CD4-positive, alpha-beta T cell (primary cell): ENCODE measurements at regions of chr10 and their contacts with region 1.

Region 1: GRCh38 chr10:114821293-114821914 is at the start of gene FHIP2A:
- DNase-seq: peak; percentile 61 to 93 (median 82)
- ATAC-seq: peak; percentile 92
- H3K4me3 ChIP-seq: peak within 1 kb of the TSS; percentile 66
- H3K4me3 Mint-ChIP-seq: peak within 1 kb of the TSS; percentile 94
- H3K27ac ChIP-seq: peak within 1 kb of the TSS; percentile 49 to 57
- H3K27ac Mint-ChIP-seq: peak within 1 kb of the TSS; percentile 92
- H3K4me1 ChIP-seq: peaks cover 15% of the 10 kb centered on the region
- H3K4me1 Mint-ChIP-seq: peaks cover 41% of the 10 kb centered on the region
- H3K27me3 ChIP-seq: no peaks in the 10 kb centered on the region
- H3K27me3 Mint-ChIP-seq: no peaks in the 10 kb centered on the region
- CTCF ChIP-seq: peak; percentile 25
- total RNA-seq, gene FHIP2A: 52.8 to 53.7 TPM

Region 2: GRCh38 chr10:113678690-113679462 is 1142.5 kb before region 1 on chr10:
- CTCF ChIA-PET with region 1: no interaction called
- POLR2A ChIA-PET with region 1: no interaction called
- intact Hi-C with region 1: no loop called
- DNase-seq: peak; percentile 36 to 79 (median 60)
- ATAC-seq: peak; percentile 30
- H3K4me3 ChIP-seq: peak overlapping the region; percentile 77
- H3K4me3 Mint-ChIP-seq: peak overlapping the region; percentile 98
- H3K27ac ChIP-seq: peak overlapping the region in 1 of 2 donors; percentile 75
- H3K27ac Mint-ChIP-seq: peak overlapping the region; percentile 88
- H3K4me1 ChIP-seq: peaks cover 25% of the 10 kb centered on the region
- H3K4me1 Mint-ChIP-seq: peaks cover 27% of the 10 kb centered on the region
- H3K27me3 ChIP-seq: no peaks in the 10 kb centered on the region
- H3K27me3 Mint-ChIP-seq: peaks cover 3% of the 10 kb centered on the region
- CTCF ChIP-seq: peak; percentile 64

Region 3: DNA sequence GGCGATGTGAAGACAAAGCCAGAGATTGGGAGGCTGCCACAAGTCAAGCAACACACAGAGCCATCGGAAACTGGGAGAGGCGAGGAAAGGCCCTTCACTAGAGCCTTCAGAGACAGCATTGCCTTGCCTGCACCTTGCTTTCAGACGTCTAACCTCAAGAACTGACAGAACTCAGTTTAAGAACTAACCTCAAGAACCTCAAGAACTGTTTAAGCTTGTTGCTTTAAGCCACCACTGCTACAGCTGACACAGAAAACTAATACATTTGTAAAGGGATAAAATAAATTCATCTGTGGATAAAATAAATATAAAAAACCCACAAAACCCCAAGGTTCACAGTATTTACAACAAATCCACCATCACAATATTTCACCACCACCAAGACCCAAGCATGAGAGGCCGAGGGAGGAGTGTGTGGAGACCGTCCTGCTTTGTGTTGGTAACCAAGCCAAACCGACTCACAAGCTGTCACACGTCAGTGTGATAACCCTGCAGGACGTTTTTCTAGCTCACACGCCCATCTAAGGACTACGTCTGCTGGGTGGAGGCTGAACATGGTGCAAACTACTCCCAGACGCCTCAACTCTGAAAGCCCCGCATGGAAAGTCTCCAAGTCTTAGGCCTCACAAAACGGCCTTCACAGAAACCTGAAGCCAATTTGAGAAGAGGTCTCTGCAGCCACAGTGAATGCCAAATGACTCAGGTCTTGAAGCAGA is 280.2 kb before region 1 on chr10:
- CTCF ChIA-PET with region 1: interaction called, 7 read pairs
- POLR2A ChIA-PET with region 1: interaction called, 10 read pairs
- intact Hi-C with region 1: loop called in 1 of 2 experiments (anchors 10 kb)
- DNase-seq: peak; percentile 58 to 93 (median 68)
- ATAC-seq: peak; percentile 76
- H3K4me3 ChIP-seq: peak overlapping the region; percentile 8
- H3K4me3 Mint-ChIP-seq: peak overlapping the region; percentile 50
- H3K27ac ChIP-seq: peak overlapping the region; percentile 86 to 92
- H3K27ac Mint-ChIP-seq: peak overlapping the region; percentile 96
- H3K4me1 ChIP-seq: peaks cover 92% of the 10 kb centered on the region
- H3K4me1 Mint-ChIP-seq: peaks cover 96% of the 10 kb centered on the region
- H3K27me3 ChIP-seq: no peaks in the 10 kb centered on the region
- H3K27me3 Mint-ChIP-seq: no peaks in the 10 kb centered on the region
- CTCF ChIP-seq: no peak

Region 4: GRCh38 chr10:114801411-114801813 is 20.0 kb before region 1 on chr10:
- CTCF ChIA-PET with region 1: interaction called, 5 read pairs
- POLR2A ChIA-PET with region 1: interaction called, 14 read pairs
- intact Hi-C with region 1: no loop called
- DNase-seq: peak in 7 of 14 experiments; percentile 1 to 76 (median 18)
- ATAC-seq: peak; percentile 85
- H3K4me3 ChIP-seq: peak overlapping the region; percentile 21
- H3K4me3 Mint-ChIP-seq: peak overlapping the region; percentile 66
- H3K27ac ChIP-seq: peak overlapping the region in 1 of 2 donors; percentile 3
- H3K27ac Mint-ChIP-seq: peak overlapping the region; percentile 70
- H3K4me1 ChIP-seq: peaks cover 22% of the 10 kb centered on the region
- H3K4me1 Mint-ChIP-seq: peaks cover 18% of the 10 kb centered on the region
- H3K27me3 ChIP-seq: no peaks in the 10 kb centered on the region
- H3K27me3 Mint-ChIP-seq: no peaks in the 10 kb centered on the region
- CTCF ChIP-seq: no peak

Region 5: DNA sequence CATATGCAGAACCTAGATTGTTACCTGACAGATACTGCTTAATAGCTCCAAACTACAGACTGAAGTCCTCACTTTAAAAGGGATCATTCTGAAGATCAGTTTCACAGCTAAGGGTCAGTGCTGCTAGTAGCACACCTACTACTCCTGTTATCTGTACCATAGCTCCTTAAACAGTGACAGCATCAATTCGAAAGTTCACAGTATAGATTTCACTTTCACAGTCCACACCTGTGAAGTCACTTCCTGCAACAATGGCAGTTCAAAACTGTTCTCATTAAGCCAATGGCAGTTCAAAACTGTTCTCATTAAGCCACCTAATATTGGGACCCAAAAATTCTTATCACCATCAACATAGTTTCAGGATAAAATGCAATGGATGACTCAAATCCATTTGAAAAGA is 10.5 kb before region 1 on chr10:
- CTCF ChIA-PET with region 1: interaction called, 19 read pairs
- POLR2A ChIA-PET with region 1: interaction called, 7 read pairs
- intact Hi-C with region 1: no loop called
- DNase-seq: peak in 1 of 14 experiments; percentile 51
- ATAC-seq: no peak
- H3K4me3 ChIP-seq: no peak overlapping the region
- H3K4me3 Mint-ChIP-seq: no peak overlapping the region
- H3K27ac ChIP-seq: no peak overlapping the region
- H3K27ac Mint-ChIP-seq: peak overlapping the region; percentile 53
- H3K4me1 ChIP-seq: peaks cover 15% of the 10 kb centered on the region
- H3K4me1 Mint-ChIP-seq: peaks cover 32% of the 10 kb centered on the region
- H3K27me3 ChIP-seq: no peaks in the 10 kb centered on the region
- H3K27me3 Mint-ChIP-seq: no peaks in the 10 kb centered on the region
- CTCF ChIP-seq: no peak

Region 6: GRCh38 chr10:114937962-114938855 is 116.8 kb after region 1 on chr10 and contains the start of gene TRUB1:
- CTCF ChIA-PET with region 1: interaction called, 6 read pairs
- POLR2A ChIA-PET with region 1: interaction called, 8 read pairs
- intact Hi-C with region 1: loop called in 1 of 2 experiments (anchors 2 kb)
- DNase-seq: peak; percentile 74 to 97 (median 87)
- ATAC-seq: peak; percentile 100
- H3K4me3 ChIP-seq: peak within 1 kb of the TSS; percentile 80
- H3K4me3 Mint-ChIP-seq: peak within 1 kb of the TSS; percentile 93
- H3K27ac ChIP-seq: peak within 1 kb of the TSS; percentile 60 to 68
- H3K27ac Mint-ChIP-seq: peak within 1 kb of the TSS; percentile 94
- H3K4me1 ChIP-seq: peaks cover 11% of the 10 kb centered on the region
- H3K4me1 Mint-ChIP-seq: peaks cover 39% of the 10 kb centered on the region
- H3K27me3 ChIP-seq: no peaks in the 10 kb centered on the region
- H3K27me3 Mint-ChIP-seq: no peaks in the 10 kb centered on the region
- CTCF ChIP-seq: no peak
- total RNA-seq, gene TRUB1: 5.9 to 7.7 TPM